Transverse colon (tissue), 4 donors: ENCODE measurements at regions of chr7 and their contacts with region 1.

Region 1: DNA sequence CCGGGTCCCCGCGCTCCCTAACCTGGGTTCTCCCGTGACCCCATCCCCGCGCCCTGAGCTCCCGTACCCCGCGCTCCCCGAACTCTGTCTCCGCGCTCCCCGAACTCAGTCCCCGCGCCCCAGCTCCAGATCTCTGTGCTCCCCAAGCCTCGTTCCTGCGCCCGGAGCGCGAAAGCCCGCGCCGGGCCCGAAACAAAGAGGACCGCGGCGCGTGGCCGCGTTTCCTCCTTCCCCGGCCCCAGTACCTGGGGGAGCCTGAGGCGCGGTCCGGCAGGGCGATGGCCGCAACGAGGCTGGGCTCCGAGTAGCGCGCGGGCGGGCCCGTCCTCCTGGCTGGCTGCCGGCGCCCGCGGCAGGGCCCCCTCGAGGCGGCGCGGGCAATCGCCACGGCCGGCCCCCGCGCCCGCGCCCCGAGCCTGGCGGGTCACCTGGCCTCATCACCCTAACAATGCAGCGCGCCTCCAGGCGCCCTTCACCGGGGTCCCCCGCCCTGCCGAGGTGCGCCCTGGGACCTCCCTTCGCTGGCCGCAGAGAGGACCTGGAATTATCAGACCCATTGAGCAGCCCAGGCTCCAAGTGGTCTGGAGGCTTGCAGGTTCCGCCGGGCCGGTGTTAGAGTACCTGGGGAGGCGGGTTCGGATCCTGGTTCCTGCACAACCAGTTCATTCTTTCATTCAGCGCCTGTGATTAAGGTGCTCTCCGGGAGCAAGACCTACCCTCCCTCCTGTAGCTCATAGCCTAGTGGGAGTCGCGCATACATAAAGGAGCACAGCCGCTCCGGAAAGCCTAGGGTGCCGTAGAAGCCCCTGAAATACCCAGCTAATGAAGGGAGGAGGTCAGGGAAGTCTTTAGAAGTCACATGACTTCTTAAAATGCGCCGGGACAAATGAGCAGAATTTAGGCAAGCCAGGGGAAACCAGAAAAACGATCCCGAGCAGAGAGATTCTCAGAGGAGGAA is at the start of gene TNS3:
- DNase-seq: peak; percentile 69
- H3K4me3 ChIP-seq: peak within 1 kb of the TSS; percentile 73 to 95 (median 80)
- H3K27ac ChIP-seq: peak within 1 kb of the TSS; percentile 80 to 93 (median 90)
- H3K4me1 ChIP-seq: peaks cover 3 to 56% (median 31%) of the 10 kb centered on the region in 4 donors
- H3K27me3 ChIP-seq: no peaks in the 10 kb centered on the region
- CTCF ChIP-seq: peak in 4 of 5 experiments; percentile 12 to 27 (median 16)
- EP300 ChIP-seq: no peak
- POLR2A ChIP-seq: peak; percentile 61
- total RNA-seq, gene TNS3: 58.5 to 104 (median 72.7) TPM

Region 2: GRCh38 chr7:47474937-47475878 is 106.9 kb before region 1 on chr7:
- in situ Hi-C with region 1: loop called in 1 of 4 experiments (anchors 25 kb)
- intact Hi-C with region 1: no loop called
- DNase-seq: peak; percentile 93
- H3K4me3 ChIP-seq: no peak overlapping the region
- H3K27ac ChIP-seq: peak overlapping the region; percentile 75 to 79 (median 78)
- H3K4me1 ChIP-seq: peaks cover 20 to 58% (median 47%) of the 10 kb centered on the region in 4 donors
- H3K27me3 ChIP-seq: no peaks in the 10 kb centered on the region
- CTCF ChIP-seq: peak in 4 of 5 experiments; percentile 12 to 49 (median 31)
- EP300 ChIP-seq: peak; percentile 63
- POLR2A ChIP-seq: peak; percentile 75